Mammary epithelial cell (primary cell): ENCODE measurements at regions of chr20 and their contacts with region 1.

Region 1: DNA sequence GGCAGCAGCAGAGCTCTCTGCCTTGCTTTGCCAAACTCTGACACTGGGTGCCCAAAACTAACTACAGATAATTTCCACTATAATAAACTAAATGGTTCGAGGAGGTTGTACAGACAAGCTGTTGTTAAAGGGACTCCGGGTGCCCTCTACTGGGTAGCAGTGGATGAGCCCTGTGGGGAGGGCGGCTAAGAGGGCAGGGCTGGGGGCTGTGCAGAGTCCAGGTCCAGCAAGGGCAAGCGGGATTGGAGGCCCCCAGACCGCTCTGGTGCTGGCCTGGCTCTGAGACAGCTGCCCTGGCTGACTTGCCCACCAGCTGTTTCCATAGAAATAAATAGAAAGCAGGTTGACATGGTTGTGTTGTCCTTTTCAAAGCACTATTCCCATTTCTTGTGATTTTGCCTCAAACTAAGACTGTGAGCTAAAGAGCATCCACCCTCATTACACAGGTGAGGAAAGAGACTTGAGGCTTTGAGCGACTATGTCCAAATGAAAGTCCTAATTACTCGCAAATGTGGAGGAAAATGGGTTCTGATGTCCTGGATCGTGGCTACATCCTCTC is 167.6 kb upstream of the CST7 start:
- DNase-seq: peak; percentile 27
- H3K4me3 ChIP-seq: no peak overlapping the region
- H3K27ac ChIP-seq: no peak overlapping the region
- H3K4me1 ChIP-seq: peaks cover 7% of the 10 kb centered on the region
- H3K27me3 ChIP-seq: no peaks in the 10 kb centered on the region
- CTCF ChIP-seq: peak; percentile 43 to 66

Region 2: GRCh38 chr20:23889775-23890211 is 891.7 kb before region 1 on chr20:
- CTCF ChIA-PET with region 1: no interaction called
- dilution Hi-C with region 1: no loop called
- in situ Hi-C with region 1: no loop called
- intact Hi-C with region 1: loop called (anchors 5 kb)
- DNase-seq: peak; percentile 71
- H3K4me3 ChIP-seq: no peak overlapping the region
- H3K27ac ChIP-seq: no peak overlapping the region
- H3K4me1 ChIP-seq: no peaks in the 10 kb centered on the region
- H3K27me3 ChIP-seq: peaks cover 2% of the 10 kb centered on the region
- CTCF ChIP-seq: peak; percentile 44 to 79

Region 3: GRCh38 chr20:24100385-24101011 is 681.0 kb before region 1 on chr20:
- CTCF ChIA-PET with region 1: no interaction called
- dilution Hi-C with region 1: no loop called
- in situ Hi-C with region 1: no loop called
- intact Hi-C with region 1: loop called (anchors 10 kb)
- DNase-seq: peak; percentile 66
- H3K4me3 ChIP-seq: no peak overlapping the region
- H3K27ac ChIP-seq: no peak overlapping the region
- H3K4me1 ChIP-seq: peaks cover 13% of the 10 kb centered on the region
- H3K27me3 ChIP-seq: no peaks in the 10 kb centered on the region
- CTCF ChIP-seq: peak; percentile 51 to 61

Region 4: GRCh38 chr20:24160563-24161375 is 620.7 kb before region 1 on chr20:
- CTCF ChIA-PET with region 1: no interaction called
- dilution Hi-C with region 1: no loop called
- in situ Hi-C with region 1: loop called in 1 of 2 experiments (anchors 10 kb)
- intact Hi-C with region 1: loop called (anchors 1 kb)
- DNase-seq: peak; percentile 43
- H3K4me3 ChIP-seq: no peak overlapping the region
- H3K27ac ChIP-seq: no peak overlapping the region
- H3K4me1 ChIP-seq: no peaks in the 10 kb centered on the region
- H3K27me3 ChIP-seq: no peaks in the 10 kb centered on the region
- CTCF ChIP-seq: peak; percentile 60 to 79

Region 5: DNA sequence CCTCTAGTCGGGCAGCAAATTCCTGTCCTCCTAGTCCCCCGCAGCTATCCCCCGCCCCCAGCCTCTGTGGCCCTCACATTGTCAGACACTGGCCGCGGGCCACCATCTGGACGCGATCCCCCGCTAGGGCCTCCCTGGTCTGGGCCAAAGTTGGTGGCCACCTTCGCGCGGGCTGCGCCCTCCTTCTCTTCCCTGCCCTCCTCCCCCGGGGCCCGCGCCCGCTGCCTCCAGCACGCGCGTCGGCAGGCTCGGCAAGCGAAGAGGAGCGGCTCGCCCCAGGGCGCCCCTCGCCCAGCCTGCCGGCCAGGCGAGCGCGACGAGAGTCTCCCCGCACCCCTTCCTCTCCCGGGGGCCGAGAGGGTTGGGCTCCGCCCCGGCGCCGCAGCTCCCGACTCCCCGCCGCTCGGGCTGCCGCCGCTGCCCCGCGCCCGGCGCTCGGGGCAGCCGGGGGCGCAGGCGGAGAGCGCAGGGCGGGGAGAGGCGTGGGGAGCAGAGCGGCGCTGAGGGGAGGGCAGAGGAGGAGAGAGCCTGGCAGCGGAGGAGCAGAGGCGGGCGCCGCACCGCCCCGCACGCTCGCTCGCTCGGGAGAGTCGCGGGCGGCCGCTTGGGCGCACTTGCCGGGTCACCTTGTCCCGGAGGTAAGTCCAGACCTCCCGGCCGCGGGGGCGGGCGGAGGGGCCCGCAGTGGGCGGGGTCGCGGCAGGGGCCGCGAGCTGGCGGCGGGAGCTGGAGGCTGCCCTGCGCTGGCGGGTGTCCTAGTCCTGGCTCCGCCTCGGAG is 312.2 kb before region 1 on chr20 and contains the start of gene SYNDIG1:
- CTCF ChIA-PET with region 1: no interaction called
- dilution Hi-C with region 1: no loop called
- in situ Hi-C with region 1: no loop called
- intact Hi-C with region 1: loop called (anchors 1 kb)
- DNase-seq: peak; percentile 20
- H3K4me3 ChIP-seq: peak within 1 kb of the TSS; percentile 37 to 51 (median 48)
- H3K27ac ChIP-seq: no peak within 1 kb of the TSS
- H3K4me1 ChIP-seq: no peaks in the 10 kb centered on the region
- H3K27me3 ChIP-seq: no peaks in the 10 kb centered on the region
- CTCF ChIP-seq: no peak
- total RNA-seq, gene SYNDIG1: 5.7 to 17.5 TPM

Region 6: GRCh38 chr20:24673678-24674495 is 107.6 kb before region 1 on chr20:
- CTCF ChIA-PET with region 1: no interaction called
- dilution Hi-C with region 1: no loop called
- in situ Hi-C with region 1: no loop called
- intact Hi-C with region 1: no loop called
- DNase-seq: peak; percentile 54
- H3K4me3 ChIP-seq: no peak overlapping the region
- H3K27ac ChIP-seq: no peak overlapping the region
- H3K4me1 ChIP-seq: peaks cover 18% of the 10 kb centered on the region
- H3K27me3 ChIP-seq: no peaks in the 10 kb centered on the region
- CTCF ChIP-seq: no peak

Region 7: GRCh38 chr20:24694727-24695597 is 86.5 kb before region 1 on chr20:
- CTCF ChIA-PET with region 1: no interaction called
- dilution Hi-C with region 1: loop called (anchors 5 kb)
- in situ Hi-C with region 1: no loop called
- intact Hi-C with region 1: no loop called
- DNase-seq: no peak
- H3K4me3 ChIP-seq: no peak overlapping the region
- H3K27ac ChIP-seq: no peak overlapping the region
- H3K4me1 ChIP-seq: peaks cover 4% of the 10 kb centered on the region
- H3K27me3 ChIP-seq: no peaks in the 10 kb centered on the region
- CTCF ChIP-seq: no peak

Region 8: GRCh38 chr20:24768201-24768636 is 13.3 kb before region 1 on chr20:
- CTCF ChIA-PET with region 1: no interaction called
- dilution Hi-C with region 1: no loop called
- in situ Hi-C with region 1: no loop called
- intact Hi-C with region 1: no loop called
- DNase-seq: no peak
- H3K4me3 ChIP-seq: no peak overlapping the region
- H3K27ac ChIP-seq: no peak overlapping the region
- H3K4me1 ChIP-seq: peaks cover 14% of the 10 kb centered on the region
- H3K27me3 ChIP-seq: no peaks in the 10 kb centered on the region
- CTCF ChIP-seq: no peak

Region 9: DNA sequence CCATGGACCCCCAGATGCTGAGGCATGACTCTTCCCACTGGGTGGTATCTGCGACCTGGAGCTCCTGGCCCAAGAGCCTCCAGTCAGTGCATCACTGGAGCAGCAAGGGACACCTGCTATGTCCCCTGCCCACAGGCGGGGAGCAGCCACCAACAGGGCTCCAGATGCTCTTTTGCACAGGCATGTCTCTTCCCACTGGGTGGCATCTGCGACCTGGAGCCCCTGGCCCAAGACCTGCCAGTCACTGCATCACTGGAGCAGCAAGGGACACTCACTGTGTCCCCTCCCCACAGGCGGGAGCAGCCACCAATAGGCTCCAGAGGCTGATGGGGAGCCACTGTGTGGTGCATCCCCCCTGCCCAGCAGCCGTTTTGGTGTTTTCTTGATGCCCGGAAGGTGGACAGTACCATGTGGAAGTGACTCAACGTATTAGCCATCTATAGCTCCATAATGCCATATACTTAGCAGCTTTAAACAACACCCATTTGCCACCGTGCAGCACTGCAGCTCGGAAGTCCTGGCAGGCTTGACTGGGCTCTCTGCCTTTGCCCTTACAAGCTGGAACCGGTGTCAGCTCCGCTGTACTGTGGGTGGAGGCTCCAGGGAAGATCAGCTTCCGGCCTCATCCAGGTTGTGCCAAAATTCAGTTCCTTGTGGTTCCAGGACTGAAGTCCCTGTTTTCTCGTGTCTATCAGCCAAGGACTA is 42.6 kb after region 1 on chr20:
- CTCF ChIA-PET with region 1: no interaction called
- dilution Hi-C with region 1: no loop called
- in situ Hi-C with region 1: no loop called
- intact Hi-C with region 1: no loop called
- DNase-seq: no peak
- H3K4me3 ChIP-seq: no peak overlapping the region
- H3K27ac ChIP-seq: no peak overlapping the region
- H3K4me1 ChIP-seq: no peaks in the 10 kb centered on the region
- H3K27me3 ChIP-seq: no peaks in the 10 kb centered on the region
- CTCF ChIP-seq: no peak

Region 10: GRCh38 chr20:24917797-24918578 is 136.5 kb after region 1 on chr20:
- CTCF ChIA-PET with region 1: no interaction called
- dilution Hi-C with region 1: no loop called
- in situ Hi-C with region 1: no loop called
- intact Hi-C with region 1: loop called (anchors 1 kb)
- DNase-seq: peak; percentile 33
- H3K4me3 ChIP-seq: no peak overlapping the region
- H3K27ac ChIP-seq: no peak overlapping the region
- H3K4me1 ChIP-seq: no peaks in the 10 kb centered on the region
- H3K27me3 ChIP-seq: no peaks in the 10 kb centered on the region
- CTCF ChIP-seq: peak; percentile 75 to 88